ENCODE measurements at regions of chr4 and their contacts with region 1.

Region 1: GRCh38 chr4:2598511-2599303 is 62.3 kb downstream of the FAM193A start:
- DNase-seq: peak; percentile 66
- ATAC-seq: peak; percentile 96
- H3K4me3 ChIP-seq: peak overlapping the region; percentile 39
- H3K27ac ChIP-seq: peak overlapping the region; percentile 79
- H3K4me1 ChIP-seq: peaks cover 49% of the 10 kb centered on the region
- H3K27me3 ChIP-seq: no peaks in the 10 kb centered on the region
- CTCF ChIP-seq: peak; percentile 57 to 60 (median 59); a peak in 5 of 6 replicates
- EP300 ChIP-seq: peak in 1 of 2 experiments; percentile 25; a peak in 1 of 4 replicates
- POLR2A ChIP-seq: no peak
- RAD21 ChIP-seq: peak; percentile 57; the same call in 1 of the 2 replicates

Region 2: GRCh38 chr4:1043658-1044468 is 1554.8 kb before region 1 on chr4:
- CTCF ChIA-PET with region 1: no interaction called
- POLR2A ChIA-PET with region 1: no interaction called
- RAD21 ChIA-PET with region 1: no interaction called
- SMC1A ChIA-PET with region 1: no interaction called
- in situ Hi-C with region 1: no loop called
- intact Hi-C with region 1: no loop called
- DNase-seq: no peak
- ATAC-seq: no peak
- H3K4me3 ChIP-seq: no peak overlapping the region
- H3K27ac ChIP-seq: no peak overlapping the region
- H3K4me1 ChIP-seq: no peaks in the 10 kb centered on the region
- H3K27me3 ChIP-seq: no peaks in the 10 kb centered on the region
- CTCF ChIP-seq: no peak
- EP300 ChIP-seq: no peak
- POLR2A ChIP-seq: no peak
- RAD21 ChIP-seq: no peak

Region 3: DNA sequence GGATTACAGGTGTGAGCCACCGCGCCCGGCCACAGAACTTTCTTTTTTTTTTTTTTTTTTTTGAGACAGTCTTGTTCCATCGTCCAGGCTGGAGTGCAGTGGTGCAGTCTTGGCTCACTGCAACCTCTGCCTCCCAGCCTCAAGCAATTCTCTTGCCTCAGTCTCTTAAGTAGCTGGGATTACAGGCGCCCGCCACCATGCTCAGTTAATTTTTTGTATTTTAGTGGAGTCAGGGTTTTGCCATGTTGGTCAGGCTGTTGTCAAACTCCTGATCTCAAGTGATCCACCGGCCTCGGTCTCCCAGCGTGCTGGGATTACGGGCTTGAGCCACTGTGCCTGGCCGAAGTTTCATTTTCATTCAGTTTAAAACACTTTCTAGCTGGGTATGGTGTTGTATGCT is 45.9 kb before region 1 on chr4:
- CTCF ChIA-PET with region 1: no interaction called
- POLR2A ChIA-PET with region 1: interaction called, 3 read pairs
- RAD21 ChIA-PET with region 1: interaction called, 10 read pairs
- SMC1A ChIA-PET with region 1: interaction called, 3 read pairs
- in situ Hi-C with region 1: no loop called
- intact Hi-C with region 1: no loop called
- DNase-seq: no peak
- ATAC-seq: no peak
- H3K4me3 ChIP-seq: no peak overlapping the region
- H3K27ac ChIP-seq: no peak overlapping the region
- H3K4me1 ChIP-seq: no peaks in the 10 kb centered on the region; the same call in none of the 2 replicates
- H3K27me3 ChIP-seq: no peaks in the 10 kb centered on the region
- CTCF ChIP-seq: no peak
- EP300 ChIP-seq: no peak
- POLR2A ChIP-seq: no peak
- RAD21 ChIP-seq: no peak

Region 4: DNA sequence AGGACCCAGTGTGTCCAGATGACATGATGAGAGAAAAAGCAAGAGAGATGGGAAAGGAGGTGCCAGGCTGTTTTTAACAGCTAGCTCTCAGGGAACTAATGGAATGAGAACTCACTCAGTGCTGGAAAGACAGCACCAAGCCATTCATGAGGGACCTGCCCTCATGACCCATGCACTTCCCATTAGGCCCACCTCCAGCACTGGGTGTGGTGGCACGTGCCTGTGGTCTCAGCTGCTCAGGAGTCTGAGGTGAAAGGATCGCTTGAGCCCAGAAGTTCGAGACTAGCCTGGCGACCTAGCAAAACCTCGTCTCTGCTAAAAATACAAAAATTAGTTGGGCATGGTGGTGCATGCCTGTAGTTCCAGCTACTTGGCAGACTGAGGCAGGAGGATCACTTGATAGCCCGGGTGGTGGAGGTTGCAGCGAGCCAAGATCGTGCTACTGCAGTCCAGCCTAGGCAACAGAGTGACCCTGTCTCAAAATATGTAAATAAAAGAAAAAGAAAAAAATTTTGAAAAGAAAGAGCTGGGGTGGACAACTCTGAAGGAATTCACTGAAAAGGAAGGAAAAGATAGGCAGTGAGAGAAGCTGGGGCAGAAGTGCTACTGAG is 11.4 kb before region 1 on chr4:
- CTCF ChIA-PET with region 1: no interaction called
- POLR2A ChIA-PET with region 1: no interaction called
- RAD21 ChIA-PET with region 1: no interaction called
- SMC1A ChIA-PET with region 1: interaction called, 17 read pairs
- in situ Hi-C with region 1: no loop called
- intact Hi-C with region 1: no loop called
- DNase-seq: no peak
- ATAC-seq: no peak
- H3K4me3 ChIP-seq: no peak overlapping the region
- H3K27ac ChIP-seq: no peak overlapping the region
- H3K4me1 ChIP-seq: peaks cover 34% of the 10 kb centered on the region
- H3K27me3 ChIP-seq: no peaks in the 10 kb centered on the region
- CTCF ChIP-seq: no peak
- EP300 ChIP-seq: no peak
- POLR2A ChIP-seq: no peak
- RAD21 ChIP-seq: no peak

Region 5: GRCh38 chr4:2615821-2616220 is 17.1 kb after region 1 on chr4:
- CTCF ChIA-PET with region 1: no interaction called
- POLR2A ChIA-PET with region 1: no interaction called
- RAD21 ChIA-PET with region 1: no interaction called
- SMC1A ChIA-PET with region 1: no interaction called
- in situ Hi-C with region 1: no loop called
- intact Hi-C with region 1: no loop called
- DNase-seq: no peak
- ATAC-seq: no peak
- H3K4me3 ChIP-seq: no peak overlapping the region
- H3K27ac ChIP-seq: no peak overlapping the region
- H3K4me1 ChIP-seq: no peaks in the 10 kb centered on the region
- H3K27me3 ChIP-seq: no peaks in the 10 kb centered on the region
- CTCF ChIP-seq: no peak
- EP300 ChIP-seq: no peak
- POLR2A ChIP-seq: no peak
- RAD21 ChIP-seq: no peak

Region 6: GRCh38 chr4:2689825-2690700 is 91.4 kb after region 1 on chr4:
- CTCF ChIA-PET with region 1: interaction called, 5 read pairs
- POLR2A ChIA-PET with region 1: interaction called, 3 read pairs
- RAD21 ChIA-PET with region 1: interaction called, 15 read pairs
- SMC1A ChIA-PET with region 1: interaction called, 4 read pairs
- in situ Hi-C with region 1: no loop called
- intact Hi-C with region 1: no loop called
- DNase-seq: peak; percentile 51
- ATAC-seq: peak; percentile 87
- H3K4me3 ChIP-seq: no peak overlapping the region
- H3K27ac ChIP-seq: peak overlapping the region; percentile 66
- H3K4me1 ChIP-seq: peaks cover 40% of the 10 kb centered on the region
- H3K27me3 ChIP-seq: no peaks in the 10 kb centered on the region
- CTCF ChIP-seq: no peak
- EP300 ChIP-seq: no peak
- POLR2A ChIP-seq: peak; percentile 57
- RAD21 ChIP-seq: no peak

Measured in GM12878 (cell line).